ENCODE measurements at regions of chr2 and their contacts with region 1.

Region 1: GRCh38 chr2:172496160-172496608 is 59.7 kb upstream of the PDK1 start:
- DNase-seq: peak; percentile 31
- H3K4me3 ChIP-seq: no peak overlapping the region
- H3K27ac ChIP-seq: no peak overlapping the region
- H3K4me1 ChIP-seq: no peaks in the 10 kb centered on the region
- H3K27me3 ChIP-seq: no peaks in the 10 kb centered on the region
- CTCF ChIP-seq: no peak
- POLR2A ChIP-seq: no peak

Region 2: GRCh38 chr2:172307800-172308199 is 188.4 kb before region 1 on chr2:
- CTCF ChIA-PET with region 1: no interaction called
- POLR2A ChIA-PET with region 1: no interaction called
- dilution Hi-C with region 1: no loop called
- intact Hi-C with region 1: no loop called
- DNase-seq: peak; percentile 94
- H3K4me3 ChIP-seq: no peak overlapping the region
- H3K27ac ChIP-seq: peak overlapping the region; percentile 88
- H3K4me1 ChIP-seq: peaks cover 31% of the 10 kb centered on the region
- H3K27me3 ChIP-seq: no peaks in the 10 kb centered on the region
- CTCF ChIP-seq: no peak
- POLR2A ChIP-seq: no peak

Region 3: GRCh38 chr2:172449911-172450550 is 46.2 kb before region 1 on chr2:
- CTCF ChIA-PET with region 1: no interaction called
- POLR2A ChIA-PET with region 1: no interaction called
- dilution Hi-C with region 1: no loop called
- intact Hi-C with region 1: no loop called
- DNase-seq: no peak
- H3K4me3 ChIP-seq: no peak overlapping the region
- H3K27ac ChIP-seq: no peak overlapping the region
- H3K4me1 ChIP-seq: peaks cover 17% of the 10 kb centered on the region
- H3K27me3 ChIP-seq: no peaks in the 10 kb centered on the region
- CTCF ChIP-seq: no peak
- POLR2A ChIP-seq: no peak

Region 4: DNA sequence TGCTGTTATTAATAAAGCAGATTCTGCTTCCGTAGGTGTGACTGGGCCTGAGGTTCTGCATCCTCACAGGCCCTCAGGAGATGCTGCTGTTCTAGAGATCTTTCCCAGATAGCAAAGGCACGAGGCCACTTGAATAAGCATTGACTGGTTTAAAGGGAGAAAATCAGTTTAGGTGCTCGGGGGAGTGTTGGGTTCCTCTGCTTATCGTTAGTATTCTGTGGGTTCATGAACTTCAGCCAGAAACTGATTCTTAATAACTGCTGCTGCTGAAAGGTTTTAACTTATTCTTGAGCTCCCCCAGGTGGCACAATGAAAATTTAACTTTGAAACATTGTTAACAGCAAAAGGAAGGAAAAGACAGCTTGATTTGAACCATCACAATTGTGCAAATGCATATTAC is 11.9 kb before region 1 on chr2:
- CTCF ChIA-PET with region 1: interaction called, 15 read pairs
- POLR2A ChIA-PET with region 1: no interaction called
- dilution Hi-C with region 1: no loop called
- intact Hi-C with region 1: no loop called
- DNase-seq: peak; percentile 55
- H3K4me3 ChIP-seq: no peak overlapping the region
- H3K27ac ChIP-seq: no peak overlapping the region
- H3K4me1 ChIP-seq: peaks cover 22% of the 10 kb centered on the region
- H3K27me3 ChIP-seq: no peaks in the 10 kb centered on the region
- CTCF ChIP-seq: no peak
- POLR2A ChIP-seq: no peak

Region 5: DNA sequence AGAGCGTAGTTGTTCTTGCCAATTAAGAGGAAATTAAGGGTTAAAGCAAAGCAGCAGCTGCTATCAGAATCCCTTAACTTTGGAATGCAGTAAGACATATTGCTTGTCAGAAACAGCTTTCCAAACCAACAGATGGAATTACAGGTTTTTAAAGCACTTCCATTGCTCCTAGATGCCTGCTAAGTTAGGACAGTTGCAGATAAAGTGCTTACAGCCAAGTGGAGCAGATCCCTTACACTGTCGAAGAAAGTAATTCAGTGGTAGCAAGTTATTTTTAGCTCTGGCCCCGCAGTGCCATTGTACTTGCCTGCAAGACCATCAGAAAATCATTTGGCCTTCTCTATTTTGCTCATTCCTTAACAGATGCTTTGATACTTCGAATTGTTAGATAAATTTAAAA is 65.1 kb after region 1 on chr2:
- CTCF ChIA-PET with region 1: no interaction called
- POLR2A ChIA-PET with region 1: no interaction called
- dilution Hi-C with region 1: no loop called
- intact Hi-C with region 1: no loop called
- DNase-seq: no peak
- H3K4me3 ChIP-seq: no peak overlapping the region
- H3K27ac ChIP-seq: no peak overlapping the region
- H3K4me1 ChIP-seq: peaks cover 8% of the 10 kb centered on the region
- H3K27me3 ChIP-seq: no peaks in the 10 kb centered on the region
- CTCF ChIP-seq: no peak
- POLR2A ChIP-seq: no peak

Measured in endothelial cell of umbilical vein (primary cell).